Gastrocnemius medialis (tissue), 4 donors: ENCODE measurements at regions of chr1 and their contacts with region 1.

Region 1: GRCh38 chr1:168342572-168343280 is 62.0 kb downstream of the TBX19 start:
- DNase-seq: peak; percentile 64 to 77
- ATAC-seq: peak; percentile 96 to 98
- H3K4me3 ChIP-seq: peak overlapping the region; percentile 2 to 52 (median 14)
- H3K27ac ChIP-seq: no peak overlapping the region
- H3K4me1 ChIP-seq: peaks cover 0 to 6% of the 10 kb centered on the region in 2 donors
- H3K27me3 ChIP-seq: no peaks in the 10 kb centered on the region
- CTCF ChIP-seq: peak; percentile 58 to 83 (median 79)
- POLR2A ChIP-seq: no peak

Region 2: DNA sequence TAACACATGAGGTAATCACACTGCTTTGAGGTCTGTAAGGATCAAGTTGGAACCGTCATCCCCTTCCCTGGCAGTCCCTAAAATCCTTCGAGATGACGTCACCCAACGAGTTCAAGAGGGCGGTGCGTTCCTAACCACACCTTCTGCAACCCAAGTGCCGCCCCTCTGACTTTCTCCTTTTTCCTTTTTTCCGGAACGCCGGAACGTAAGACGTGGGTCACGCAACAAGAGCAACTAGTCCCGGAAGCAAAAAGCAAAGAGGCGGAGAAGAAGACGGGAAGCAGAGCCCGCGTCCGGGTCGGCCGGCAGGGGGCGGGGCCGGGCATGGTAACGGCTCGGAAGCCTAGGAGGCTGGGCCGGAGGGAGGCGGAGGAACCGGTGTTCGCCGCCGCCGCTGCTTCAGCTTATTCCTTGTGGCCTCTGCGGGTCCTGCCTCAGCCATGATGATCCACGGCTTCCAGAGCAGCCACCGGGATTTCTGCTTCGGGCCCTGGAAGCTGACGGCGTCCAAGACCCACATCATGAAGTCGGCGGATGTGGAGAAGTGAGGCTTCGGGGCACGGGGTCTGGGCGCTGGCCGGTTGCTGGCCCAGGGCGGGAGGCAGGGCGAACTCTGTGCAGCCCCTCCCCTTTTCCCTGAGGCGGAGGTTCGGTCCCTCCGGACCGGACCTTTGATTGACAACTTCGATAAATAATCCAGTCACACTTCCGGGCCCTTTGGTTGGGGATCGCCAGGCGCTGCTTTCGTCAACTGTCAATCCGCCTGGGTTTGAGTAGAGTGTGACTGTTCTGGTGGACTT is 163.9 kb before region 1 on chr1 and contains the start of gene TIPRL:
- in situ Hi-C with region 1: no loop called
- intact Hi-C with region 1: no loop called
- DNase-seq: peak; percentile 88 to 93
- ATAC-seq: peak; percentile 97
- H3K4me3 ChIP-seq: peak within 1 kb of the TSS; percentile 72 to 83 (median 74)
- H3K27ac ChIP-seq: peak within 1 kb of the TSS; percentile 85 to 91 (median 90)
- H3K4me1 ChIP-seq: peaks cover 9 to 10% of the 10 kb centered on the region in 2 donors
- H3K27me3 ChIP-seq: no peaks in the 10 kb centered on the region
- CTCF ChIP-seq: peak; percentile 35 to 86 (median 80)
- POLR2A ChIP-seq: peak; percentile 81 to 85
- total RNA-seq, gene TIPRL: 23.2 to 35.1 (median 27.1) TPM

Region 3: DNA sequence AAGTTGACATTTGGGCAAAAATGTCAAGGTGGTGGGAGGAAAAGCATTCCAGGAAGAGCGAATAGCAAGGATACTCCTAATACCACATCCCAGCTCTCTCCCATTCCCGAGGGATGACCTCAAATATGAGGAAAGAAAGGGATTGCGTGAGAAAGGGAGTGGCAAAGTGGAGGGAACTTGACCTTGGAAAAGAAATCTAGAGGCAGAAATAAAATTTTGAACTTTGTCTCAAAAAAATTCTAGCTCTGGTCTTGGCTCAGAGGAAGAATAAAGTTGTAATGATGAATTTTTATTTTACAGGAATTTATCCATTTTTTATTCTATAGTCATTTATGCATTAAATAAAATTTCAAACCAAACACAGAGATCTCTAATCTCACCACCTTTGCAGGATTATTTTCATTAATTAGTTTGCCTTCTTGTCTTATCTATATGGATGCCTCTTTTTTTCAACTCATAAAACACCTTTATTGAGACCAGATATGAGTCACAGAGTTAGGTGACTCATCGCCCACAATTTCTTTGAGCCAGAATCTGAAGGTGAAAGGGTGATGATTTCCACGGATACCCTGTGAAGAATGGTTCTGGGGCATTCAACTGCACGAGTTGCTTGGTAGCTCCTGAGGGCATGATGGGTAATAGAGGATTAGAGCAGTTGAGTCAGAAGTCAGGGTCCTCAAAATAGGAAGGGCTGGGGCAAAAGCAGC is 66.0 kb after region 1 on chr1:
- in situ Hi-C with region 1: no loop called
- intact Hi-C with region 1: no loop called
- DNase-seq: no peak
- ATAC-seq: no peak
- H3K4me3 ChIP-seq: no peak overlapping the region
- H3K27ac ChIP-seq: no peak overlapping the region
- H3K4me1 ChIP-seq: no peaks in the 10 kb centered on the region
- H3K27me3 ChIP-seq: no peaks in the 10 kb centered on the region
- CTCF ChIP-seq: no peak
- POLR2A ChIP-seq: no peak

Region 4: DNA sequence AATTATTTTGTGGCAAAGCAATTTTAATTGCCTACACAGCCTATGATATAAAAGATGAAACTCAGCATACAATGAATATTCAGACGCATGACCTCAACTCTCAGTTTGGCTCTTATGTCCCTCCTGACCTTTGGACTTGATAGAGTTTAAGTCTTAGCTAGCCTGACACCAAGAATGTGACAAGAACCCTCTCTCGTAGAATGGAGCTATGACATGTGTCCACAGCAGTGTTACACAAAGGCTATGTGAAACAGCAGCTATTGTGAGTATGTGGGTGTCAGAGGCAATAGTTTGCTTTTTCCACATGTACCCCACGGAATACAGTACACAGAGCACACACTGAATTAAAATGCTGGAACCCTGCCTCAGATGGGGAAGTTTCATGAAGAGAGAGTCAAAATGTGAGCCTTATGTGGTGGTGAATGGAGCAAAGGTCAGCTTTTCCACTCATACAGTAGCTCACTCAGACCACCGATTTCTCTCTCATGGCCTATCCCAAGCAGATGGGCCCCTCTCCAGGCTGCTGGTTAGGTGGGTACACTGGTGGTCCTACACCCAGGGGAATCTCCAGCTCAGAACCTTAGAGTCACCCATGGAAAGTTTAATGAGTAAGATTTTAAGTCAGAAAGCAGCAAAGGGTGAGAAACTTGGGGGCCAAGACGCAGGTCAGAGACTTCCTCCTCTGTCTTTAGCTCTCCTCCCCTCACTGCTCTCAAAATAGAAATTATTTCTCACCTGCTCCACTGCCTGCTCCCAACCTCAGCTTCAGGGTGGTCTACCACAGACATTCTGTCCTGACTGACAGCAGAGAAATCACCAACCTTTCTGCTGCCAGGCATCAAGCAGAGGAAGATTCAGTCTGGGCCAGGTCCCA is 211.2 kb after region 1 on chr1:
- in situ Hi-C with region 1: loop called in 1 of 4 experiments (anchors 25 kb)
- intact Hi-C with region 1: no loop called
- DNase-seq: no peak
- ATAC-seq: no peak
- H3K4me3 ChIP-seq: no peak overlapping the region
- H3K27ac ChIP-seq: no peak overlapping the region
- H3K4me1 ChIP-seq: no peaks in the 10 kb centered on the region
- H3K27me3 ChIP-seq: no peaks in the 10 kb centered on the region
- CTCF ChIP-seq: no peak
- POLR2A ChIP-seq: no peak

Region 5: DNA sequence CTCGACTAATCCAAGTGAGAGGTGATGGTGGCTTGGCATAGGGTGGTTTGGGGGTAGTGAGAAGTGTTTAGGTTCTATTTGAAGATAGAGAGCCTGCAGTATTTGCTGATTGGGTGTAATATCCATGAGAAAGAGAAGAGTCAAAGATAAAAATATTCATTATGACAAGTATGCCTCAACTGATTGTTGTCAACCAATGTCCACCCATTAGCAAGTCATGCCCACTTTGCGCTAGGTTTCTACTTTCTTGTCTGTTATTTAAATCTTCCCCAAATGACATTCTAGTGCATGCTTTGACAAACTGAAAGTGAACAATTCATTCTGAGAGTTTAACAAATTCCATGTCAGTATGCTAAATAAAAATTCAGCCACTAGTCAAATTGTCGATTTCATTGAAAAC is 229.9 kb after region 1 on chr1:
- in situ Hi-C with region 1: loop called in 3 of 4 experiments (anchors 10 to 25 kb)
- intact Hi-C with region 1: loop called (anchors 5 kb)
- DNase-seq: no peak
- ATAC-seq: no peak
- H3K4me3 ChIP-seq: no peak overlapping the region
- H3K27ac ChIP-seq: no peak overlapping the region
- H3K4me1 ChIP-seq: no peaks in the 10 kb centered on the region
- H3K27me3 ChIP-seq: no peaks in the 10 kb centered on the region
- CTCF ChIP-seq: no peak
- POLR2A ChIP-seq: no peak

Region 6: GRCh38 chr1:169348383-169349036 is 1005.8 kb after region 1 on chr1:
- in situ Hi-C with region 1: loop called in 3 of 4 experiments (anchors 10 to 25 kb)
- intact Hi-C with region 1: loop called (anchors 2 kb)
- DNase-seq: no peak
- ATAC-seq: peak in 1 of 2 donors; percentile 54
- H3K4me3 ChIP-seq: no peak overlapping the region
- H3K27ac ChIP-seq: no peak overlapping the region
- H3K4me1 ChIP-seq: no peaks in the 10 kb centered on the region
- H3K27me3 ChIP-seq: no peaks in the 10 kb centered on the region
- CTCF ChIP-seq: peak; percentile 65 to 85 (median 82)
- POLR2A ChIP-seq: no peak

Region 7: GRCh38 chr1:169794530-169795416 is 1452.0 kb after region 1 on chr1 and contains the start of gene METTL18:
- in situ Hi-C with region 1: no loop called
- intact Hi-C with region 1: loop called (anchors 10 kb)
- DNase-seq: peak; percentile 79 to 86
- ATAC-seq: peak; percentile 100
- H3K4me3 ChIP-seq: peak within 1 kb of the TSS; percentile 75 to 86 (median 80)
- H3K27ac ChIP-seq: peak within 1 kb of the TSS; percentile 87 to 92 (median 91)
- H3K4me1 ChIP-seq: peaks cover 18 to 20% of the 10 kb centered on the region in 2 donors
- H3K27me3 ChIP-seq: no peaks in the 10 kb centered on the region
- CTCF ChIP-seq: peak in 1 of 5 experiments; percentile 11
- POLR2A ChIP-seq: peak in 1 of 2 donors; percentile 27
- total RNA-seq, gene METTL18: 1.1 to 3.6 (median 2.7) TPM